HepG2 (cell line): ENCODE measurements at regions of chr3 and their contacts with region 1.

Region 1: DNA sequence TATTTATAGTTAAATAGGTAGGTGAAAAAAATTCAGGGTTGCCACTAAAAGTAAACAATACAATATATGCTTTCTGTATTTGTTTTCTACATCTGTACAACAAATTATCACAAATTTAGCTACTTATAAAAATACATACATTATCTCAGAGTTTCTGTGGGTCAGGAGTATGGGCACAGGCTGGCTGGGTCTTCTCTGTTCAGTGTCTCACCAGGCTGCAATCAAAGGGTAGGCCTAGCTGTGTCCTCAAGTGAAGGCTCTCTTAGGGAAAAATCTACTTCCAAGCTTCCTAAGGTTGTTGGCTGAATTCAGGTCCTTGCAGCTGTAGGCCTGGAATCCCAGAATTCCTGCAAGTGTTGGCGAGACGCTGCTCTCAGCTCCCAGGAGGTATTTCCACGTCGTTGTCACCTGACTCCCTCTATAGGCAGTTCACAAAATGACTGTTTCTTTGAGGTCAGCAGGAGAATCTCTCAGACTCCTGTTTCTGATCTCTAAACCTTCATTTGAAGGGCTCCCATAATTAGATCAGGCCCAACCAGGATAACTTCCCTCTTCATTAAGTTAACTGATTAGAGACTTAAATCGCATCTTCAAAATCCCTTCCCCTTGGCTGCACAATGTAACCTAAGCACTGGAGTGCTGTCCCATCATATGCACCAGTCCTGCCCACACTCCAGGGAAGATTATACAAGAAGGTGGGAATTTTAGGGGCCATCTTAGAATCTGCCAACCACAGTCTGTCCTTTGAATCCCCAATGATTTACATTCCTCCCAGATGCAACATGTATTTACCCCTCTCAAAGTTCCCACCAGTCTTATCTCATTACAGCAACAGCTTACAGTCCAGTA is 296.6 kb downstream of the SUCLG2 start:
- DNase-seq: peak; percentile 68
- ATAC-seq: peak; percentile 97
- H3K4me3 ChIP-seq: no peak overlapping the region
- H3K27ac ChIP-seq: no peak overlapping the region
- H3K4me1 ChIP-seq: no peaks in the 10 kb centered on the region
- H3K27me3 ChIP-seq: no peaks in the 10 kb centered on the region
- CTCF ChIP-seq: peak; percentile 86
- EP300 ChIP-seq: peak in 1 of 2 experiments; percentile 44; a peak in 1 of 4 replicates
- POLR2A ChIP-seq: no peak
- RAD21 ChIP-seq: peak; percentile 89

Region 2: GRCh38 chr3:66971891-66972551 is 385.8 kb before region 1 on chr3:
- CTCF ChIA-PET with region 1: no interaction called
- POLR2A ChIA-PET with region 1: no interaction called
- in situ Hi-C with region 1: loop called (anchors 25 kb)
- intact Hi-C with region 1: loop called (anchors 5 kb)
- DNase-seq: peak; percentile 60
- ATAC-seq: peak; percentile 100
- H3K4me3 ChIP-seq: peak overlapping the region; percentile 26 to 64 (median 27); a peak in 3 of 6 replicates
- H3K27ac ChIP-seq: no peak overlapping the region
- H3K4me1 ChIP-seq: peaks cover 8% of the 10 kb centered on the region; the same call in 1 of the 2 replicates
- H3K27me3 ChIP-seq: peaks cover 0 to 12% of the 10 kb centered on the region in 2 experiments; a peak in 3 of 5 replicates
- CTCF ChIP-seq: peak; percentile 87
- EP300 ChIP-seq: no peak
- POLR2A ChIP-seq: no peak
- RAD21 ChIP-seq: peak; percentile 57; the same call in 1 of the 2 replicates

Region 3: GRCh38 chr3:67059443-67059842 is 298.4 kb before region 1 on chr3:
- CTCF ChIA-PET with region 1: no interaction called
- POLR2A ChIA-PET with region 1: no interaction called
- in situ Hi-C with region 1: no loop called
- intact Hi-C with region 1: no loop called
- DNase-seq: no peak
- ATAC-seq: no peak
- H3K4me3 ChIP-seq: no peak overlapping the region
- H3K27ac ChIP-seq: no peak overlapping the region
- H3K4me1 ChIP-seq: no peaks in the 10 kb centered on the region
- H3K27me3 ChIP-seq: no peaks in the 10 kb centered on the region; a peak in 2 of 5 replicates
- CTCF ChIP-seq: no peak
- EP300 ChIP-seq: no peak
- POLR2A ChIP-seq: no peak
- RAD21 ChIP-seq: no peak

Region 4: GRCh38 chr3:67198374-67198773 is 159.5 kb before region 1 on chr3:
- CTCF ChIA-PET with region 1: no interaction called
- POLR2A ChIA-PET with region 1: no interaction called
- in situ Hi-C with region 1: no loop called
- intact Hi-C with region 1: loop called (anchors 5 kb)
- DNase-seq: no peak
- ATAC-seq: no peak
- H3K4me3 ChIP-seq: no peak overlapping the region
- H3K27ac ChIP-seq: no peak overlapping the region
- H3K4me1 ChIP-seq: no peaks in the 10 kb centered on the region
- H3K27me3 ChIP-seq: no peaks in the 10 kb centered on the region
- CTCF ChIP-seq: no peak
- EP300 ChIP-seq: no peak
- POLR2A ChIP-seq: no peak
- RAD21 ChIP-seq: no peak

Region 5: GRCh38 chr3:67296039-67296892 is 61.6 kb before region 1 on chr3:
- CTCF ChIA-PET with region 1: no interaction called
- POLR2A ChIA-PET with region 1: no interaction called
- in situ Hi-C with region 1: no loop called
- intact Hi-C with region 1: loop called (anchors 5 kb)
- DNase-seq: peak; percentile 99
- ATAC-seq: peak; percentile 87
- H3K4me3 ChIP-seq: peak overlapping the region in 2 of 3 experiments; percentile 24 to 34; a peak in 3 of 6 replicates
- H3K27ac ChIP-seq: peak overlapping the region; percentile 93
- H3K4me1 ChIP-seq: peaks cover 69% of the 10 kb centered on the region
- H3K27me3 ChIP-seq: no peaks in the 10 kb centered on the region
- CTCF ChIP-seq: no peak
- EP300 ChIP-seq: peak; percentile 43 to 97; a peak in 3 of 4 replicates
- POLR2A ChIP-seq: no peak
- RAD21 ChIP-seq: no peak

Region 6: DNA sequence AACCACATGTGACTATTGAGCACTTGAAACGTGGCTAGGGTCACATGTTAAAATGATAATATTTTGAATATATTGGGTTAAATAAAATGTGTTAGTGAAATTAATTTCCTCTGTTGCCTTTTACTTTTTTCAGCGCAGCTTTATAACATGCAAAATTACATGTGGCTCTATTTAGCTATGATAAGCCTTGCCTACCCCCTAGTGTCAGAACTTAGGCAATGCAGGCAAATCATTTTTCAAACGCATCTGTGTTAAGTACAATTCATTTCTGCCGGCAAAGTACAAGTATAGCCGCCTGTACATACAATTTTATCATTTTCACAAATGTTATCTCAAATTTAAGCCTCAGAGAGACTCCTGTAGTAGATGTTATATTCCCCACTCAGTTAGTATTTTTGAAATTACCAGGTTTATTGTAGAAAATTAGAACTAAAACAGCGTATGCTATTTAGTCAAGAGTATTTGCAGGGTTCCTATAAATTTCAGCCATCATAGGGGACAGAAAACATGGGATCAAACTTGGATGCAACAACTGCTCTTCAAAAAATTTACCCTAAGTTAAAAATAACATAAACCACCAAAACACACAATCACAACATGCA is 1518.4 kb after region 1 on chr3:
- CTCF ChIA-PET with region 1: no interaction called
- POLR2A ChIA-PET with region 1: no interaction called
- in situ Hi-C with region 1: loop called (anchors 25 kb)
- intact Hi-C with region 1: no loop called
- DNase-seq: peak; percentile 31
- ATAC-seq: peak; percentile 76
- H3K4me3 ChIP-seq: no peak overlapping the region
- H3K27ac ChIP-seq: no peak overlapping the region
- H3K4me1 ChIP-seq: no peaks in the 10 kb centered on the region
- H3K27me3 ChIP-seq: peaks cover 0 to 3% of the 10 kb centered on the region in 2 experiments; a peak in 1 of 5 replicates
- CTCF ChIP-seq: peak; percentile 80
- EP300 ChIP-seq: no peak
- POLR2A ChIP-seq: no peak
- RAD21 ChIP-seq: 0 out of 2 replicates have a peak, but pooled peaks have one; percentile 50